CD4-positive, alpha-beta T cell (primary cell): ENCODE measurements at regions of chr9 and their contacts with region 1.

Region 1: DNA sequence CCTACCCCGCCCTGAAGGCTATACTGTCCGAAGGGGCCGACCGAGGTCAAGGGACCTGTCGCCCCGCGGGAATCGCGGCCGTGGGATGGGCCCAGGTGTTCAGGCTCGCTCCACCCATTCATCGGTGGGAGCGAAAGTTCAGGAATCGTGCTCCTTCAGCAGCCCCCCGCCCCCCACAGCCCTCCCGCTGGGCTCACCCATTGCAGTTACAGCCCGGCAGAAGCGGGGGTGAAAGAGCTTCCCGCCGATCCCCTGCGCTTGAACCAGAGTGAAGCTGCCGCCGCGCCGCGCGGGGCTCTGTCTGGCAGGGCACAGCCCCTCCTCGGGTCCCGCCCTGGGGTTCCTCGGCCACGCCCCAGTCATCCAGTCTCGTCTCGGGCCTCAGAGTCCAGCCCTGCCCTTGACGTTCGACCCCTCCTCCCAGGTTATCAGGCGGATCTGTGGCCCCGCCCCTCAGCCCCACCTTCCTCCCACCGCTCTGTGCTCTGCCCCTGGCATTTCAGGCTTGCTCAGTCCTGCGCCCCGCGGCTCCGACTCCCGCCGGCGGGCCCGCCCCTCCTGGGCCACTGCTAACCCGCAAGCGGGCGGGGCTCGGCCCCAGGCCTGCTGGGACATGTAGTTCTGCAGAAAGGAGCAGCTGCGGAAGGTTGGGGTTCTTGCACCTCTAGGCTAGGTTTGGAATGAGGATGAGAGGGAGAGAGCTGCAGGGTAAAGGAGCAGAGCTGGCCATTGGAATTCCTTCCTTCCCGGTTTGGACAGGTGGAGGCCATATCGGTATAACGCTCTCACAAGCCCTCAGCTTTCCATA is at the start of gene MYORG:
- DNase-seq: peak; percentile 92 to 99 (median 95)
- ATAC-seq: peak; percentile 73
- H3K4me3 ChIP-seq: peak within 1 kb of the TSS; percentile 74
- H3K4me3 Mint-ChIP-seq: peak within 1 kb of the TSS; percentile 96
- H3K27ac ChIP-seq: peak within 1 kb of the TSS in 1 of 2 donors; percentile 36
- H3K27ac Mint-ChIP-seq: peak within 1 kb of the TSS; percentile 77
- H3K4me1 ChIP-seq: peaks cover 48% of the 10 kb centered on the region
- H3K4me1 Mint-ChIP-seq: peaks cover 47% of the 10 kb centered on the region
- H3K27me3 ChIP-seq: no peaks in the 10 kb centered on the region
- H3K27me3 Mint-ChIP-seq: no peaks in the 10 kb centered on the region
- CTCF ChIP-seq: no peak
- total RNA-seq, gene MYORG: 0.42 to 0.58 TPM

Region 2: DNA sequence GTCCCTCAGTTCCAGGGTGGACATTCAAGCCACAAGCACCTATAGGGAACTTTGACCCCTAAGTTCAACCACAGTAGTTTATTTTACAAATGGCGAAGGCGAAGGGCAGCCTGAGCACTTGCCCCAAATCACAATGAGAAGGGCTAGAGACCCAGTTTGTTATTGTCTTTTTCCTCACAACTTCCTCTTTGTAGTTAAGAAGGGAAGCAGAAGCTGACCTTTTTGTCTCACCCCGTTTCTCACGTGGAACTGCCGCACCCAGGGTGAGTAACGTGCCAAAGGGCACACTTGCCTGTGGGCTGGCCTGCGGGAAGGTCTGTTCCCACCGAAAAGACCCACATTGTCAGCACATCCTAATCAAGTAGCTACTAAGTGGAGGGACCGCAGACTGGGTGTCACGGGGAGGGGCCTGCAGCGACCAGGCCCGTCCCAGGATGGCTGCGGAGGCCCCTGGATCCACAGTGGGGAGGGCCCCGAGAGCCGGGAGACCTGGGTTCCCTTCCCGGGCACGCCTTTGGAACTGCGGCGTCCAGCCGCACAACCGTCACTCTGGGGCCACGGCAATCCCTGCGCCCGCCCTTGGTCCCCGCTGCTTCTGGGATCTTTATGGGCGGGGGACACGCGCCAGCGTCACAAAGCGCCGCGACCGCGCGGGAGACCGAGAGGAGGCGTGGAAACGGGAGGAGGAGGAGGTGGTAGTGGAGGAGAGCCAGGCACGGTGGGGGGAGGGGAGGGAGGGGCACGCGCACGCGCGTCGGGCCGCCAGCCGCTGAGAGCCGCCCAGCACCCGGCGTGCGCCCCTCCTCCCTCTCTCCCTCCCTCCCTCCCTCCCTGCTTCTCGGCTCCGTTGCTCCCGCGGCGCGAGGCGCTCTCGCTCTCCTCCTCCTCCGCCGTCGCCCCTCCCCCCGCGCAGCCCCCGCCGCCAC is 560.2 kb before region 1 on chr9 and contains the start of gene UBE2R2:
- CTCF ChIA-PET with region 1: no interaction called
- POLR2A ChIA-PET with region 1: no interaction called
- intact Hi-C with region 1: loop called in 1 of 2 experiments (anchors 2 kb)
- DNase-seq: peak; percentile 89 to 99 (median 92)
- ATAC-seq: peak; percentile 80
- H3K4me3 ChIP-seq: peak within 1 kb of the TSS; percentile 64
- H3K4me3 Mint-ChIP-seq: peak within 1 kb of the TSS; percentile 96
- H3K27ac ChIP-seq: peak within 1 kb of the TSS; percentile 96
- H3K27ac Mint-ChIP-seq: peak within 1 kb of the TSS; percentile 98
- H3K4me1 ChIP-seq: peaks cover 34% of the 10 kb centered on the region
- H3K4me1 Mint-ChIP-seq: peaks cover 59% of the 10 kb centered on the region
- H3K27me3 ChIP-seq: no peaks in the 10 kb centered on the region
- H3K27me3 Mint-ChIP-seq: no peaks in the 10 kb centered on the region
- CTCF ChIP-seq: no peak
- total RNA-seq, gene UBE2R2: 22.7 to 24.5 TPM

Region 3: GRCh38 chr9:34158362-34158869 is 218.4 kb before region 1 on chr9:
- CTCF ChIA-PET with region 1: no interaction called
- POLR2A ChIA-PET with region 1: no interaction called
- intact Hi-C with region 1: no loop called
- DNase-seq: no peak
- ATAC-seq: no peak
- H3K4me3 ChIP-seq: no peak overlapping the region
- H3K4me3 Mint-ChIP-seq: no peak overlapping the region
- H3K27ac ChIP-seq: no peak overlapping the region
- H3K27ac Mint-ChIP-seq: no peak overlapping the region
- H3K4me1 ChIP-seq: no peaks in the 10 kb centered on the region
- H3K4me1 Mint-ChIP-seq: no peaks in the 10 kb centered on the region
- H3K27me3 ChIP-seq: no peaks in the 10 kb centered on the region
- H3K27me3 Mint-ChIP-seq: no peaks in the 10 kb centered on the region
- CTCF ChIP-seq: no peak

Region 4: GRCh38 chr9:34178520-34179212 is 198.1 kb before region 1 on chr9 and contains the start of gene UBAP1:
- CTCF ChIA-PET with region 1: interaction called, 6 read pairs
- POLR2A ChIA-PET with region 1: interaction called, 3 read pairs
- intact Hi-C with region 1: loop called (anchors 5 to 10 kb)
- DNase-seq: peak; percentile 88 to 98 (median 94)
- ATAC-seq: peak; percentile 97
- H3K4me3 ChIP-seq: peak within 1 kb of the TSS; percentile 71
- H3K4me3 Mint-ChIP-seq: peak within 1 kb of the TSS; percentile 94
- H3K27ac ChIP-seq: peak within 1 kb of the TSS; percentile 87 to 90
- H3K27ac Mint-ChIP-seq: peak within 1 kb of the TSS; percentile 90
- H3K4me1 ChIP-seq: peaks cover 32% of the 10 kb centered on the region
- H3K4me1 Mint-ChIP-seq: peaks cover 15% of the 10 kb centered on the region
- H3K27me3 ChIP-seq: no peaks in the 10 kb centered on the region
- H3K27me3 Mint-ChIP-seq: no peaks in the 10 kb centered on the region
- CTCF ChIP-seq: no peak
- total RNA-seq, gene UBAP1: 47.1 to 50.4 TPM

Region 5: GRCh38 chr9:34363619-34364351 is 13.0 kb before region 1 on chr9:
- CTCF ChIA-PET with region 1: interaction called, 3 read pairs
- POLR2A ChIA-PET with region 1: interaction called, 10 read pairs
- intact Hi-C with region 1: no loop called
- DNase-seq: peak in 2 of 14 experiments; percentile 27 to 40
- ATAC-seq: peak; percentile 56
- H3K4me3 ChIP-seq: no peak overlapping the region
- H3K4me3 Mint-ChIP-seq: peak overlapping the region; percentile 3
- H3K27ac ChIP-seq: no peak overlapping the region
- H3K27ac Mint-ChIP-seq: peak overlapping the region; percentile 5
- H3K4me1 ChIP-seq: peaks cover 14% of the 10 kb centered on the region
- H3K4me1 Mint-ChIP-seq: peaks cover 20% of the 10 kb centered on the region
- H3K27me3 ChIP-seq: no peaks in the 10 kb centered on the region
- H3K27me3 Mint-ChIP-seq: no peaks in the 10 kb centered on the region
- CTCF ChIP-seq: no peak

Region 6: DNA sequence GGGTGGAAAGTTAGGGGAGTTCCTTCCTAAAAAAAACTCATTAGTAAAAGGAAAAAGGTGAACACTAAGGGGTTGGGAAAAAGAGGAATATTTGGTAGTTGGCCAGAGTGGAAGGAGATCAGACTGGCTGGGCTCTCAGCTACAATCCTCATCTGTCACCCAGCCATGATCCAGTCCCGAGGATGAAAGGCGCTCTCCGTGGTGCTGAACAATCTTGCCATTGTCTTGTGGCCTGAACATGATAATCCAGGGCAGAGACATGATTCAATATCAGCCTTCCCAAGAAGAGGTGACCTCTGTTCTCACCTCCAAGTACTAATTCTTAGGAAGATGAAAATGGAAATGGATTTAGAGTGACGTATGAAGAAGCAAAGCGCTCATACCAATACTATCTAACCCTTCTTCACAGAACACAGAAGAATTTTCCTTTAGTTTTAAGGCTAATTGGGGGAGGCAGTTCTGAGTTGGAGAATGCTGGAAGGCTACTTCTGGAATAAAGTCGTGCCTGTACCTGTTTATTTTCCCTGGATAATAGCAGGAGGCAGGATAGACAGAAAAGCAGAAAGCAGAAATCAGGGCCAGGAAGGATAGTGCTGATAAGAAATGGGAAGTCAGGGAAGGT is 36.5 kb after region 1 on chr9:
- CTCF ChIA-PET with region 1: no interaction called
- POLR2A ChIA-PET with region 1: no interaction called
- intact Hi-C with region 1: no loop called
- DNase-seq: peak in 7 of 14 experiments; percentile 5 to 28 (median 23)
- ATAC-seq: no peak
- H3K4me3 ChIP-seq: no peak overlapping the region
- H3K4me3 Mint-ChIP-seq: no peak overlapping the region
- H3K27ac ChIP-seq: no peak overlapping the region
- H3K27ac Mint-ChIP-seq: no peak overlapping the region
- H3K4me1 ChIP-seq: no peaks in the 10 kb centered on the region
- H3K4me1 Mint-ChIP-seq: no peaks in the 10 kb centered on the region
- H3K27me3 ChIP-seq: no peaks in the 10 kb centered on the region
- H3K27me3 Mint-ChIP-seq: no peaks in the 10 kb centered on the region
- CTCF ChIP-seq: no peak

Region 7: DNA sequence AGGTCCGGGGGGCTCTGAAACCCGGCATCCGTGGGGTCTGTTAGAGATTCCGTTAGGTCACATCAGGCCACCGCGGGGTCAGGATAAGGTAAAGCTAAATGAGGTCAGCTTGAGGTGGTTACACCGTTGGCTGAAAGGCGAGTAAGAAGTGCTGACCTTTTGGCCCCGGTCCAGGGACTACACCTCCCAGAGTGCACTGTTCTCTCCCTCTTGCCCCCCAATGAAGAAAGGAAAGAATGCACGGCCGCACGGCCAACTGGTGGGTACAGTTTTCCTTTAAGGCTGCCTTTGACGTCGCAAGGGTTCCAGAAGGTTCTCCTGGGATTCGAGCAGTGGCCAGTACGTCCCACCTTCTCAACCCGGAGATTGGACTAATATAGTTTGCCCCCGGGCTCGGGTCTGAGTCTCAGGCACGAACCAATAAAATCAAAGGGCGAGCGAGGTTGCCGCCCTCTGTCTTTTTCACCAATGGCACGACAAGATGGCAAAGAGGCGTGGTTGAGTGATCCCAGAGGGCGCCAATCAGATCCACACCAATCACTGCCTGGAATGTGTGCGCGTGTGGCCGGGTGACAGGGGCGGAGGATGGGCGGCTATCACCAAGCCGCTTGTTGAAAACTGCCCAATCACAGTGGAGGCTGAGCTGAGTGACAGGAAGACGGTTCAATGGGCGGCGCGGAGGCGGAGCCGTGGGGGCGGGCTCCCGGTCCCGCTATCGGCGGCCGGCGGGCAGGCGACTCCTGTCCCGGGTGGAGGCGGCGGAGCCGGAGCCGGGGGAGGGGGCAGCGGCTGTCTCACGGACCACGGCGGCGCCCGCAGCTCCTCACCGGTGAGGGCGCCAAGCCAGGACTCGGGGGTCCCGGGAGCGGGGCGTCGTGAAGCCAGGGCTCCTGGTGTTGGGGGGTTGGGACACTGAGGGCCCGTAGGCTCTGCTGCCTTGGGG is 612.5 kb after region 1 on chr9 and contains the start of gene DNAJB5:
- CTCF ChIA-PET with region 1: no interaction called
- POLR2A ChIA-PET with region 1: no interaction called
- intact Hi-C with region 1: loop called in 1 of 2 experiments (anchors 10 kb)
- DNase-seq: peak; percentile 93 to 99 (median 95)
- ATAC-seq: peak; percentile 90
- H3K4me3 ChIP-seq: peak within 1 kb of the TSS; percentile 78
- H3K4me3 Mint-ChIP-seq: peak within 1 kb of the TSS; percentile 94
- H3K27ac ChIP-seq: peak within 1 kb of the TSS; percentile 62 to 63
- H3K27ac Mint-ChIP-seq: peak within 1 kb of the TSS; percentile 84
- H3K4me1 ChIP-seq: peaks cover 51% of the 10 kb centered on the region
- H3K4me1 Mint-ChIP-seq: peaks cover 51% of the 10 kb centered on the region
- H3K27me3 ChIP-seq: no peaks in the 10 kb centered on the region
- H3K27me3 Mint-ChIP-seq: no peaks in the 10 kb centered on the region
- CTCF ChIP-seq: no peak
- total RNA-seq, gene DNAJB5: 2.7 to 2.8 TPM